ENCODE measurements at regions of chr2 and their contacts with region 1.

Region 1: GRCh38 chr2:72579591-72580180 is 246.1 kb downstream of the EXOC6B start:
- ATAC-seq: peak in 4 of 8 experiments; percentile 35 to 66 (median 54)
- H3K4me3 ChIP-seq: no peak overlapping the region
- H3K27ac ChIP-seq: no peak overlapping the region
- H3K4me1 ChIP-seq: no peaks in the 10 kb centered on the region

Region 2: GRCh38 chr2:71558300-71559051 is 1021.2 kb before region 1 on chr2:
- in situ Hi-C with region 1: loop called in 1 of 9 experiments (anchors 25 kb)
- ATAC-seq: peak in 5 of 8 experiments; percentile 5 to 81 (median 47)
- H3K4me3 ChIP-seq: no peak overlapping the region
- H3K27ac ChIP-seq: no peak overlapping the region
- H3K4me1 ChIP-seq: peaks cover 20 to 36% of the 10 kb centered on the region in 2 donors

Region 3: DNA sequence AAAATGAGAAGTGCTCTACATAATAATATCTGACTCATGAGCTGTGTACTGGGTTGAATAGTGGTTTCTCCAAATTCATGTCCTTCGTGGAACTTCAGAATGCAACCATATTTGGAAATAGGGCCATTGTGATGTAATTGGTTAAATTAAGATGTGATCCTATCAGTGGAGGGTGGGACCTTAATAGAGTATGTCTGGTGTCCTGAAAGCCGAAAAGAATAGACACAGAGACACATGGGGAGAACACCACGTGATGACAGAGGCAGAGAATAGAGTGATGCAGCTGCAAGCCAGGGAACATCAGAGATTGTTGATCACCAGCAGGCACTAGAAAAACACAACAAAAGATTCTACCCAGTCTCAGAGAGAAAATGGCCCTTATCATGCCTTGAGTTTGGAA is 64.0 kb before region 1 on chr2:
- in situ Hi-C with region 1: no loop called
- ATAC-seq: peak in 2 of 8 experiments; percentile 97 to 98
- H3K4me3 ChIP-seq: no peak overlapping the region
- H3K27ac ChIP-seq: no peak overlapping the region
- H3K4me1 ChIP-seq: no peaks in the 10 kb centered on the region

Region 4: DNA sequence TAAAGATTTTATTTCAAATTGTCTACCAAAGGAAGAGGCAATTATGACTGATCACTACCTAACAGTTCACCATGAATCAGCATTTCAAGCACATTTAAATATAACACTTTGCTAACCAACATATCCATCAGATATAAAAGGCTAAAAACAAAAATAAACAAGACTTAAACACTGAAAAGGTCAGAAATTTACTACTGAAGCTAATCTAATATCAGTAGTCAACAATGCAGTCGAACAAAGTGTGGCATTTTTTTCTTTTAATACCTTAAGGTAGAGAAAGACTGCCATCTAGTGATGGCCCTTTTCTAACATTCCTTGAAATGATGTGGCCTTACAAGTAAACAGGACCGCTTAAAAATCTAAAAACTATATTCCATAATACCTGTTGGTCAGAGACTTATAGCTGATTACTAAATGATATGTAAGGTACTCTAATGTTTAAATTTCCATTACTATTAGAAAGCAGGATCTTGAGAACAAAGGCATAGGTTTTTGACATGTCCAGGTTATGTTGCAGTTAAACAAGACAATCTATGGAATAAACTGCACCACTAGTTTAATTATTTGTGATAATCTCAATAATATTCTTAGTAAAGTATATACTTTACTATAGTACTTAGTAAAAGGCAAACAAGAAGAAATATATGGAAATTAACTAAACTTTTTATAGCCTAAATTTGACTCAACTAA is 166.1 kb after region 1 on chr2:
- in situ Hi-C with region 1: no loop called
- ATAC-seq: peak in 4 of 8 experiments; percentile 39 to 72 (median 57)
- H3K4me3 ChIP-seq: no peak overlapping the region
- H3K27ac ChIP-seq: no peak overlapping the region
- H3K4me1 ChIP-seq: no peaks in the 10 kb centered on the region